ENCODE measurements at regions of chr1 and their contacts with region 1.

Region 1: GRCh38 chr1:89762779-89763648 is 57.8 kb upstream of the LRRC8D start:
- DNase-seq: peak; percentile 91
- ATAC-seq: peak; percentile 99
- H3K4me3 Mint-ChIP-seq: peak overlapping the region; percentile 76
- H3K27ac Mint-ChIP-seq: peak overlapping the region; percentile 93
- H3K4me1 Mint-ChIP-seq: peaks cover 53% of the 10 kb centered on the region
- H3K27me3 Mint-ChIP-seq: no peaks in the 10 kb centered on the region
- CTCF ChIP-seq: peak; percentile 99

Region 2: DNA sequence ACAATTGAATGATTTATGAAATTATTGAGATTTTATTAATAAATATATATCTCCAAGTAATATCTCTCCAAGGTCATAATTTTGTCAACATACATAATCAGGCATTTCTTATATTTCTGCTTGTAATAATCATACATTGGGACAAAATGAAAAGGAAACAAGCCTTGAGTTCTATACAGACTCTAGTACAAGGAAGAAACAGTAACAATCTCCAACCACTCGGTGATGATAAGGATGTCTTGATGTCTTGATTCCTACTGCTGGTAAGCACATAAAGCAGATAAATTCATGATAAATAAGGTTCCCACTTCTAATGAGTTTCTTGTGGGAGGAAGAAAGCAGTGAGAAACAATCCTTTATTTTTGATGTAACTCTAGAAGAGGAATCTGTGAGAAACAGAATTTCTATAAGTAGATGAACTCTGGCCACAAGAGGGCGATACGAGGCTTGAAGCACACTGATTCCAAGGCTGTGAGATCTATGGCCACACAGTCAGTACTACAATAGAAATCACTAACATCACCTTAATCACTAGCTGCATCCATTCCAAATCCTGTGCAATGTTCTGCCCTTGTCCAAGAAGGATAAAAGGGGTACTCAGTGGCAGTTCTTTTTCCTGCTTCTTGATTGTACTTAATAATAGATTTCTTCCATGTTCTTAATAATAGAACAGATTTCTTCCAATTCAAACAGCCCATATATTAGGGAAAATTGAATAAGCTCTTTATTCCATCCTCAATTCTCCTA is 279.8 kb before region 1 on chr1:
- CTCF ChIA-PET with region 1: interaction called, 40 read pairs
- POLR2A ChIA-PET with region 1: no interaction called
- intact Hi-C with region 1: no loop called
- DNase-seq: peak; percentile 94
- ATAC-seq: peak; percentile 87
- H3K4me3 Mint-ChIP-seq: no peak overlapping the region
- H3K27ac Mint-ChIP-seq: no peak overlapping the region
- H3K4me1 Mint-ChIP-seq: peaks cover 21% of the 10 kb centered on the region
- H3K27me3 Mint-ChIP-seq: peaks cover 3% of the 10 kb centered on the region
- CTCF ChIP-seq: peak; percentile 85

Region 3: GRCh38 chr1:89598450-89599331 is 164.3 kb before region 1 on chr1:
- CTCF ChIA-PET with region 1: interaction called, 33 read pairs
- POLR2A ChIA-PET with region 1: interaction called, 20 read pairs
- intact Hi-C with region 1: no loop called
- DNase-seq: no peak
- ATAC-seq: no peak
- H3K4me3 Mint-ChIP-seq: no peak overlapping the region
- H3K27ac Mint-ChIP-seq: peak overlapping the region; percentile 64
- H3K4me1 Mint-ChIP-seq: peaks cover 81% of the 10 kb centered on the region
- H3K27me3 Mint-ChIP-seq: no peaks in the 10 kb centered on the region
- CTCF ChIP-seq: peak; percentile 95

Region 4: GRCh38 chr1:89622895-89623294 is 140.1 kb before region 1 on chr1:
- CTCF ChIA-PET with region 1: interaction called, 27 read pairs
- POLR2A ChIA-PET with region 1: interaction called, 5 read pairs
- intact Hi-C with region 1: no loop called
- DNase-seq: no peak
- ATAC-seq: peak; percentile 11
- H3K4me3 Mint-ChIP-seq: no peak overlapping the region
- H3K27ac Mint-ChIP-seq: peak overlapping the region; percentile 59
- H3K4me1 Mint-ChIP-seq: peaks cover 57% of the 10 kb centered on the region
- H3K27me3 Mint-ChIP-seq: no peaks in the 10 kb centered on the region
- CTCF ChIP-seq: no peak

Region 5: GRCh38 chr1:89657886-89658285 is 105.1 kb before region 1 on chr1:
- CTCF ChIA-PET with region 1: interaction called, 58 read pairs
- POLR2A ChIA-PET with region 1: interaction called, 7 read pairs
- intact Hi-C with region 1: loop called (anchors 5 kb)
- DNase-seq: peak; percentile 58
- ATAC-seq: peak; percentile 71
- H3K4me3 Mint-ChIP-seq: no peak overlapping the region
- H3K27ac Mint-ChIP-seq: peak overlapping the region; percentile 87
- H3K4me1 Mint-ChIP-seq: peaks cover 85% of the 10 kb centered on the region
- H3K27me3 Mint-ChIP-seq: no peaks in the 10 kb centered on the region
- CTCF ChIP-seq: no peak

Region 6: GRCh38 chr1:89698624-89699023 is 64.4 kb before region 1 on chr1:
- CTCF ChIA-PET with region 1: interaction called, 19 read pairs
- POLR2A ChIA-PET with region 1: interaction called, 7 read pairs
- intact Hi-C with region 1: no loop called
- DNase-seq: no peak
- ATAC-seq: no peak
- H3K4me3 Mint-ChIP-seq: peak overlapping the region; percentile 39
- H3K27ac Mint-ChIP-seq: peak overlapping the region; percentile 96
- H3K4me1 Mint-ChIP-seq: peaks cover 90% of the 10 kb centered on the region
- H3K27me3 Mint-ChIP-seq: no peaks in the 10 kb centered on the region
- CTCF ChIP-seq: no peak

Region 7: DNA sequence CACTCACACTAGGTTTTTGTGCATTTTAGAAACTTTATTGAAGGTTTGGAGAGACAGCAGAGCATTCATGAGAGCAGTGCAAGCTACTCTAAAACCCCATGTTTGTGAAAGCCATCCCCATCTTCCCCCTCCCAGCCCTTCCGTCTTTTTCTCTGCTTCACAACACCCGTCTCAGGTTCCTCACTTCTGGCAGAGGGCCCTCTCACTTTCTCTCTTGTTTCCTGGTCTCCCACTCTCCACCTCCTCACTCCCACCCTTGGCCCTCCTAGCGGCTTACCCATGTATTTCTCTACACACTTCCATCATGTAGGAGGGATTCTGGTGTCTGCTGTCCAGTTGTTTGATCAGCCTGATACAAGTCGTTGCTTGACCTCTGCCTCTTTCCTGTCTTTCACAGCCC is 37.4 kb before region 1 on chr1:
- CTCF ChIA-PET with region 1: interaction called, 72 read pairs
- POLR2A ChIA-PET with region 1: interaction called, 15 read pairs
- intact Hi-C with region 1: loop called (anchors 2 kb)
- DNase-seq: no peak
- ATAC-seq: no peak
- H3K4me3 Mint-ChIP-seq: no peak overlapping the region
- H3K27ac Mint-ChIP-seq: peak overlapping the region; percentile 98
- H3K4me1 Mint-ChIP-seq: peaks cover 81% of the 10 kb centered on the region
- H3K27me3 Mint-ChIP-seq: no peaks in the 10 kb centered on the region
- CTCF ChIP-seq: no peak

Measured in activated CD8-positive, alpha-beta T cell treated with anti-CD3 and anti-CD28 coated beads for 36 hours (primary cell).